ENCODE measurements at regions of chr9 and their contacts with region 1.

Region 1: DNA sequence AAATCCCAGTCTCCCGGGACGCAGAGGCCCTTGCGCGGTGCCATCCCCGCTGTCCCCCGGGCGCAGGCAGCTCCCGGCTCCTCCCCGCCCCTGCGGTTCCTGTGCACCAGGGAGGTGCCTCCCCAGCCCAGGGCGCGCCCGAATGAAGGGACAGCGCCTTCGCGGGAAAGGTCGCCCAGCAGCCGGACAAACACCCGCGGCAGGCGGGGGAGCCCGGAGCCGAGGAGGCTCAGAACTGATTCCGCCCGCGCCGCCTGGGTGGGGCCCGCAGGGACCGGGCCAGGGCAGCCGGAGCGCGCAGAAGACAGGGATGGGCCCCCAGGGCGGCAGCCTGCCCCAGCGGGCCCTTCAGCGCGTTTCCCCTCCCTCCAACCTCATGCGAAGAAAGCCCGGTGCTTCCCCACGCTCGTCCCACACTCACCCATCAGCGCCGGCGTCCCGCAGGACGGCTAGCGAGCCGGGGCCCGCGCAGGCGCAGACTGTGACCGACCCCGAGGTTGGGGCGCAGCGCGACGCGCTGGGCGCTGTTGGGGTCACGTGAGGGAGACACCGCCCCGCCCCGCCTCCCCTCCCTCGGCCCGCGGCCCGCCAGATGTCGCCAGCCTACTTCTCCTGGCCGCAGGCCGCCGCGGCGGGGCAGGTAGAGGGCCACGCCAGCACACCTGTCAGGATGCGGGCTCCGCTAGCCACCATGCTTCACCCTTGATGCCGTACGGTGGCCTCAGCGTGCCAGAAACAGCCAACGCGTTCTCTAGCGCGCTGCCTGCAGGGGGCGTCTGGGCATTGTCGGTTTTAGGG is at the start of gene SLC25A51:
- DNase-seq: peak; percentile 97
- H3K4me3 Mint-ChIP-seq: peak within 1 kb of the TSS; percentile 84
- H3K27ac Mint-ChIP-seq: peak within 1 kb of the TSS; percentile 87
- H3K4me1 Mint-ChIP-seq: peaks cover 19% of the 10 kb centered on the region
- H3K27me3 Mint-ChIP-seq: no peaks in the 10 kb centered on the region
- total RNA-seq, gene SLC25A51: 24.0 to 25.8 TPM

Region 2: DNA sequence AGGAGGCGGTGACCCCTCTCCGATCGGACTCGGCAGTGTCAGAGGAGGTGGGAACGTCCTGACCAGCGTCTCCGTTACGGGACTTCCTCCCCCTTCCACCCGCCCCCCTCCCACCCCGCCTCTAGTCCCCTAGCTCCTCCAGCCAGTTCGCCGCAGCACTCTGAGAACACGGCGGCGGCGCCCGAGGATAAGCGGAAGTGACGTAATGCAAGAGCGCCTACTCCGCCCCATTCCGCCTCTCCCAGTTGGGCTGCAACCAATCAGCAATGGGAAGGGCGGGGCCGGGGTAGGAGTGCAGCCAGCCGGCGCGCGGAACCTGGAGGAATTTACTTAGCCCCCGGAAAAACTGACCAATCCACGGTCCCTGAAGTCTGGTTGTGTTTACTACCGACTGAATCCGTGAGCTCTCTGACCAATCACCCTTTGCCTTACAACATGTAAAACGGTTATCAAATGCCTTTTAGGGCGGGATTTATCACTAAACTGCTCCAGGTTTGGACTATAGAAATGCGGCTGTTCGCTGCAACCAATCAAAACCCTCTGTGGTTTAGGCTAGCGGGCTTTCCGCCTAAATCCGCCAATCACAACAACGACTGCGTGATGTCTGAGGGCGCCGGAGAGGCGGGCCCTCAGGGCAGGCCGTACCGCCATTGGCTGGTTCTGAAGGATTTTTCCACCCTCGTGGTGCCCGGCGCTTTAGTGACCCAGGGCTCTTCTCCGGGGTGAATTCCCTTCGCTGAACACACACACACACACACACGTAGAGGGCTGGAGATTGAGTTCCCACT is 438.4 kb before region 1 on chr9 and contains the start of gene ZBTB5:
- CTCF ChIA-PET with region 1: no interaction called
- POLR2A ChIA-PET with region 1: no interaction called
- intact Hi-C with region 1: loop called (anchors 1 kb)
- DNase-seq: peak; percentile 99
- H3K4me3 Mint-ChIP-seq: peak within 1 kb of the TSS; percentile 97
- H3K27ac Mint-ChIP-seq: peak within 1 kb of the TSS; percentile 95
- H3K4me1 Mint-ChIP-seq: peaks cover 29% of the 10 kb centered on the region
- H3K27me3 Mint-ChIP-seq: no peaks in the 10 kb centered on the region
- total RNA-seq, gene ZBTB5: 8.3 to 9.3 TPM

Region 3: GRCh38 chr9:37592108-37592951 is 311.5 kb before region 1 on chr9 and contains the start of gene TOMM5:
- CTCF ChIA-PET with region 1: no interaction called
- POLR2A ChIA-PET with region 1: interaction called, 4 read pairs
- intact Hi-C with region 1: loop called (anchors 5 kb)
- DNase-seq: peak; percentile 96
- H3K4me3 Mint-ChIP-seq: peak within 1 kb of the TSS; percentile 100
- H3K27ac Mint-ChIP-seq: peak within 1 kb of the TSS; percentile 98
- H3K4me1 Mint-ChIP-seq: peaks cover 32% of the 10 kb centered on the region
- H3K27me3 Mint-ChIP-seq: peaks cover 10% of the 10 kb centered on the region
- total RNA-seq, gene TOMM5: 146 to 147 TPM

Region 4: DNA sequence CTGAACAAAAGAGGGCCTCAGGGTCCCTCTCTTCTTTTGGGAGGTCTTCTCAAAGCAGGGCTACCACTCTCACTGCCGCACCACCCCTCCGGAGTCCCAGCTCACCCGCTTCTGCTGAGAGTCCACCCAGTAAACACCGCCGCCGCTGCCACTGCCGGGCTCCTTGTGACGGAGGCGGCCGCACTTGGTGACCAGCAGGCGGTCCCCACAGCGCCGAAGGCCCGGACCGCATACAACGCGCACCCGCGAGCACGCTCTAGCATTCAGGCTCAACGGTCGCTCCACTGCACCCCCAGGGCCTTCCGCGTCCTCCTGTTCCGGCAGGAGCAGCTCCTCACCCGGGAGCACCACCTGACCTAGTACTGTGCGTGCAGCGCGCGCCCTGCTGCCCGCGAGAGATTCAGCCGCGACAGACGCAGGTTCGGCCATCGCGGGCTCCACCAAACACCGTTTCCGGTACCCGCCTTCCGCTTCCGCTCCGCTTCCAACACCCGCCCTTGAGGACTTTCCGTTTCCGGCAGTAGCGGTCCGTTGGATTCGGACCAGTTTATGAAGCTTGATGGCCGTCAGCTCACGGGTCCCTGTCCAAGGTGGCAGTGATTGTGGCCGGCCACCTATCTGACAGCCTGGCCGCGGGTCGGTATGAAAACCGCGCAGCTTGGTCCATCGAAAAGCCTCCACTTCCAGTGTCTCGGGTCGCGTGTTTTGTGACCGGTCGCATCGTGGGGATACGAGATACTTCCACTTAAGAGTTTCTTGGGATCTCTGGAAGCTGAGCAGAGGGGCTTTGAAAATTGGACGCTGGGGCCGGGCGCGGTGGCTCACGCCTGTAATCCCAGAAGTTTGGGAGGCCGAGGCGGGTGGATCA is 119.0 kb before region 1 on chr9 and contains the start of gene EXOSC3:
- CTCF ChIA-PET with region 1: interaction called, 3 read pairs
- POLR2A ChIA-PET with region 1: no interaction called
- intact Hi-C with region 1: loop called (anchors 1 kb)
- DNase-seq: peak; percentile 93
- H3K4me3 Mint-ChIP-seq: peak within 1 kb of the TSS; percentile 98
- H3K27ac Mint-ChIP-seq: peak within 1 kb of the TSS; percentile 93
- H3K4me1 Mint-ChIP-seq: peaks cover 38% of the 10 kb centered on the region
- H3K27me3 Mint-ChIP-seq: no peaks in the 10 kb centered on the region
- total RNA-seq, gene EXOSC3: 97.5 to 97.9 TPM

Region 5: GRCh38 chr9:37836386-37836785 is 67.5 kb before region 1 on chr9:
- CTCF ChIA-PET with region 1: no interaction called
- POLR2A ChIA-PET with region 1: no interaction called
- intact Hi-C with region 1: loop called (anchors 10 kb)
- DNase-seq: peak; percentile 31
- H3K4me3 Mint-ChIP-seq: no peak overlapping the region
- H3K27ac Mint-ChIP-seq: no peak overlapping the region
- H3K4me1 Mint-ChIP-seq: peaks cover 11% of the 10 kb centered on the region
- H3K27me3 Mint-ChIP-seq: no peaks in the 10 kb centered on the region

Region 6: GRCh38 chr9:38392235-38393127 is 488.6 kb after region 1 on chr9 and contains the start of gene ALDH1B1:
- CTCF ChIA-PET with region 1: no interaction called
- POLR2A ChIA-PET with region 1: no interaction called
- intact Hi-C with region 1: loop called (anchors 5 kb)
- DNase-seq: peak; percentile 81
- H3K4me3 Mint-ChIP-seq: peak within 1 kb of the TSS; percentile 89
- H3K27ac Mint-ChIP-seq: peak within 1 kb of the TSS; percentile 67
- H3K4me1 Mint-ChIP-seq: peaks cover 17% of the 10 kb centered on the region
- H3K27me3 Mint-ChIP-seq: no peaks in the 10 kb centered on the region
- total RNA-seq, gene ALDH1B1: 22.1 to 22.2 TPM